ENCODE measurements at regions of chr9 and their contacts with region 1.

Region 1: GRCh38 chr9:35732122-35732799 is at the starts of genes CREB3 and TLN1:
- DNase-seq: peak; percentile 98
- ATAC-seq: peak; percentile 87
- H3K4me3 Mint-ChIP-seq: no peak within 1 kb of the TSS
- H3K27ac Mint-ChIP-seq: peak within 1 kb of the TSS; percentile 93
- H3K4me1 Mint-ChIP-seq: peaks cover 21% of the 10 kb centered on the region
- H3K27me3 Mint-ChIP-seq: no peaks in the 10 kb centered on the region
- total RNA-seq, gene CREB3: 24.0 to 26.0 TPM
- total RNA-seq, gene TLN1: 217 to 238 TPM

Region 2: DNA sequence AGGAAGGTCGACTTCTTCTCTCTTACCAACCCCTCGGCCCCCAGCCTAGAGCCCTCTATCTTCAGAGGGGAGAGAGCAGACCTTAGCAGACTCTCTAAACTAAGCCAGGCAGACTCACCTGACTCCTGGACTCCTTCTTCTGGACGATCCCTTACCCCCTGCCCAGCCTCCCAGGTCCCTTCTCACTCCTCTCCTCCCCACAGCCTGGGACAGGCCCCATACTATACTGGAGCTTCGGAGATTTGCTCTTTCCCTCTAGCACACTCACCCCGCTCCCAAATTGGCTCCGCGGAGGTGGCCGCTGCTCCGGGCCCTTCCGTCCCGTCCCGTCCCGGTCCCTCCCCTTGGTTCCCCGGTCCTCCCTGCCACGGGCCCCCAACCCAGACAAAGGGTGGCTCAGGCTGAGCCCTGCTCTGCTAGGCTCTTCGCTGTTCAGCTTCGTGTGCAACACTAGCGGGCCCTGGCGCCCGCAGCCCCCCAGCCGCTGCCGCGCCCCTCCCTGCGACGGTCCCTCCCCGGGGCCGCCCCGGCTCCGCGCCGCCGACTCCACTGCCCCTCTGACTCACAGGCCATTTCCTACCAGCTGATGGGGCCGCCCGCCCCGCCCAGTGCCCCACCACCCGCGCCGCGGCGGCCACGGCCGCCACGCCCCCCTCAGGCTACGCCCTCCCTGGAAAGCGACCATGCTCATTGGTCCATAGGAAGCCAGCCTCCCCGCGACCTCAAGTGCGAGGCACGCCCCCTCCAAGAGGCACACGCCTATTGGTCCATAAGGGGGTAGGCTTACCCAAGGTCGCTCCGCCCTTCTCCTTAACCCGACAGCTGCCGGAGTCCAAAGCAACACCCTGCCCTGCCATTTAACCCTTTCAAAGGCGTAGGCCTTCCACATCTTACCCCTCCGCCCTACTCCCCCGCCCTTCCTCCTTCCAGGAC is 621.0 kb before region 1 on chr9:
- CTCF ChIA-PET with region 1: no interaction called
- POLR2A ChIA-PET with region 1: no interaction called
- intact Hi-C with region 1: loop called (anchors 1 to 2 kb)
- DNase-seq: peak; percentile 98
- ATAC-seq: peak; percentile 82
- H3K4me3 Mint-ChIP-seq: peak overlapping the region; percentile 63
- H3K27ac Mint-ChIP-seq: peak overlapping the region; percentile 90
- H3K4me1 Mint-ChIP-seq: peaks cover 48% of the 10 kb centered on the region
- H3K27me3 Mint-ChIP-seq: no peaks in the 10 kb centered on the region

Region 3: DNA sequence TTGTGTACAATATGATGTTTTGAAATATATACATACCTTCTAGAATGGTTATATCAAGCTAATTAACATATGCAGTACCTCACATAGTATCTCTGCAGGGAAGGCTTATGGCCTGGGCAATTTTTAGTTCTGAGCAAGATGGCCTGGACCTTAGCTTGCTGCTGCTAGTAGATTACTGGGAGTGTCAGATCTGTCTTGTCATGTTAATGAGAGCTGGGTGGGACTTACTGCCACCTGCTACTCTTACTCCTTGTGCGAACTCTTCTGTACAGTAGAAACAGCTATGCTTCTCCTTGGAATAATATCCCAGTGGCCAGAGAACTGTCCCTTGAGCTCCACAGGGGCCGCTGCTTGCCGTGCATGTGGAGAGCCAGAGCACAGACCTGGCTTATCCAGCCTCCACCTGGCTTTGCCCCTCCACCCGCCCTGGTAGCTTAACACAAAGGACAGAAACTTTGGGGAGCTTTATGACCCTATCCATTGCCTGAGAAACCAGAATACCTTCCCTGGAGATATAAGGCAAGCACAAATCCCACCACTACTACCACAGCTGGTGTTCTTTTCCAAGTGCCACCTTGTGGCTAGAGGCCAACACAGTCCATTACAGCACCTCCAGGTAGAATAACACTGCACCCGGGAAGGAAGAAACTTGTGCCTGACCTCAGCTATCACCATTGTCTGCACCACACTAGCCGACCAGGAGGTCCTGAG is 316.7 kb before region 1 on chr9:
- CTCF ChIA-PET with region 1: no interaction called
- POLR2A ChIA-PET with region 1: no interaction called
- intact Hi-C with region 1: no loop called
- DNase-seq: no peak
- ATAC-seq: no peak
- H3K4me3 Mint-ChIP-seq: no peak overlapping the region
- H3K27ac Mint-ChIP-seq: no peak overlapping the region
- H3K4me1 Mint-ChIP-seq: no peaks in the 10 kb centered on the region
- H3K27me3 Mint-ChIP-seq: peaks cover 29% of the 10 kb centered on the region

Region 4: DNA sequence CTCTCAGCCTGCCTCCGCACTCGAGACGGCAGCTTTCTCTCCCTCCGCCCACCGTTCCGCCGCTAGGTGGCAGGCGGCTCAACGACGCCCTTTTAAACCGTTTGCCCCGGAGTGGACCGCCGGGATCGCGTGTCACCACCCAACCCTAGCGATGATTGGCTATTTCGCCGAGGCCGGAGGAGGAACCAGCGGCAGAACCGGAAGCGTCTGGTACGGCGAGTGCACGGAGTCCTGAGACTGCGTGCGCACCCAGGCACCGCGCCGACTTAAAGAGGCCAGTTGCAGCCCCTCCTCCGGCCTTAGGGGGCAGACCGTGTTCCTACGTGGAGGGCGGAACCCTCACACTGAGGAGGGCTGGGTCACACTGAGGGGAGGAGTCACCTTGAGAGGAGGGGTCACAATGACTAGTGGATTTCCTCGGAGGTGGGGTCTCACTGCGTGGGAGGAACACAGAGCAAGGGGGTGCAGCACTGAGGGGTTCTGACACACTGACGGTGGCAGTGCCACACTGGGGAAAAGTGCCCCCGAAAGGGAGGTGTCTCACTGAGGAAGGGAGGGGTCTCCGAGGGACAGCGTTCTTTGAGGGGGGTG is 128.2 kb before region 1 on chr9:
- CTCF ChIA-PET with region 1: interaction called, 5 read pairs
- POLR2A ChIA-PET with region 1: no interaction called
- intact Hi-C with region 1: loop called (anchors 1 kb)
- DNase-seq: peak; percentile 100
- ATAC-seq: peak; percentile 93
- H3K4me3 Mint-ChIP-seq: peak overlapping the region; percentile 83
- H3K27ac Mint-ChIP-seq: peak overlapping the region; percentile 96
- H3K4me1 Mint-ChIP-seq: peaks cover 23% of the 10 kb centered on the region
- H3K27me3 Mint-ChIP-seq: no peaks in the 10 kb centered on the region

Region 5: GRCh38 chr9:35657546-35658136 is 74.6 kb before region 1 on chr9 and contains the start of gene RMRP:
- CTCF ChIA-PET with region 1: interaction called, 28 read pairs
- POLR2A ChIA-PET with region 1: interaction called, 4 read pairs
- intact Hi-C with region 1: loop called (anchors 1 kb)
- DNase-seq: peak; percentile 97
- ATAC-seq: peak; percentile 95
- H3K4me3 Mint-ChIP-seq: peak within 1 kb of the TSS; percentile 80
- H3K27ac Mint-ChIP-seq: peak within 1 kb of the TSS; percentile 98
- H3K4me1 Mint-ChIP-seq: peaks cover 64% of the 10 kb centered on the region
- H3K27me3 Mint-ChIP-seq: peaks cover 2% of the 10 kb centered on the region
- total RNA-seq, gene RMRP: 894 to 11,462 TPM

Region 6: DNA sequence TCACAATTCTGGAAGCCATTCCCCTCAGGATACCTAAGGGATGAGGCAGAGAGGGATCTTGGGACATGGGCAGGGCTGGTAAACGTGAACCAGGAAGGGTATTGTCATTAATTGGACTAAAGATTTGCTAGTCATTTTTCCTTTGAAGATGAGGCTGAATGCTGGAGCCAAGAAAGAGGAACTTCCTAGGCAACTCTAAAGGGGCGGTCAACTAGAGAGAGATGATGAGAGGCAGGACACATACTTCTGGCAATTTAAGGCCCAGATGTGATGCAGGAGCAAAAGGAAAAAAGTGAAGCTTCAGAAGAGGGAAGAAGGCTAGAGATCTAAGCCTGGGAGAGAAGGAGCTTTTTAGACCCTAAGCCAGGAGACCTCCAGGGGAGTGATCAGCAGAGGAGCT is 11.2 kb after region 1 on chr9:
- CTCF ChIA-PET with region 1: interaction called, 54 read pairs
- POLR2A ChIA-PET with region 1: interaction called, 14 read pairs
- intact Hi-C with region 1: no loop called
- DNase-seq: no peak
- ATAC-seq: no peak
- H3K4me3 Mint-ChIP-seq: no peak overlapping the region
- H3K27ac Mint-ChIP-seq: no peak overlapping the region
- H3K4me1 Mint-ChIP-seq: peaks cover 37% of the 10 kb centered on the region
- H3K27me3 Mint-ChIP-seq: no peaks in the 10 kb centered on the region

Region 7: DNA sequence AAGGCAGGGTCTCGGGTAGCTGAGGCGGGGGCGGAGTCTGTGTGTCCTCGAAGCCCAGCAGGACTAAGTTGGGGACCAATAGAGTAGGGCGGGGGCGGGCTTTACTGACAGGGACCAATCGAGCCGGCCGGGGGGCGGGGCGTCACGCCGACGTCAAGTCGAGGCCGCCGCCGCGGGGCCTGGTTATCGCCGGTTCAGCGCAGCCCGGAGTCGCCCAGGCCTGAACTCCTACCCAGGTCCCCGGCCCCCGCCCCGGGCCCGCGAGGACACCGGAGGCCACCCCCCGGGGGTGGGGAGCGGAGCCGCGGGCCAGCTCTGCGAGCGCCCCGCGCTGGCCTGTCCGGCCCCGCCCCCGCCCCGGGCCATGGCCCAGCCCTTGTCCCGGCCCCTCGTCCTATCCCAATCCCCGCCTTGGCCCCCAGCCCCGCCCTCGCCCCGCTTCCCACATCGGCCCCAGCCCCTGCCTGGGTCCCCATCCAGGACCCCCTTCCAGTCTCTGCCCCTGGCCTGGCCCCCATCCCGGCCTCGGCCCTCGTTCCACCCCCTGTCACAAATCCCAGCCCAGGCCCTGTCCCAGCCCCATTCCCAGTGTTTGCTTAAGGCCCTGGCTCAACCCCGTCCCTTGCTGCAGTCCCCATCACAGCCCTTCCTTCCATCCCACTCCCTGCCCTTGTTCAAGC is 97.0 kb after region 1 on chr9 and contains the start of gene TMEM8B:
- CTCF ChIA-PET with region 1: interaction called, 3 read pairs
- POLR2A ChIA-PET with region 1: no interaction called
- intact Hi-C with region 1: loop called in 1 of 2 experiments (anchors 1 kb)
- DNase-seq: peak; percentile 98
- ATAC-seq: peak; percentile 92
- H3K4me3 Mint-ChIP-seq: peak within 1 kb of the TSS; percentile 78
- H3K27ac Mint-ChIP-seq: peak within 1 kb of the TSS; percentile 78
- H3K4me1 Mint-ChIP-seq: peaks cover 13% of the 10 kb centered on the region
- H3K27me3 Mint-ChIP-seq: no peaks in the 10 kb centered on the region
- total RNA-seq, gene TMEM8B: 5.8 to 6.9 TPM

Region 8: DNA sequence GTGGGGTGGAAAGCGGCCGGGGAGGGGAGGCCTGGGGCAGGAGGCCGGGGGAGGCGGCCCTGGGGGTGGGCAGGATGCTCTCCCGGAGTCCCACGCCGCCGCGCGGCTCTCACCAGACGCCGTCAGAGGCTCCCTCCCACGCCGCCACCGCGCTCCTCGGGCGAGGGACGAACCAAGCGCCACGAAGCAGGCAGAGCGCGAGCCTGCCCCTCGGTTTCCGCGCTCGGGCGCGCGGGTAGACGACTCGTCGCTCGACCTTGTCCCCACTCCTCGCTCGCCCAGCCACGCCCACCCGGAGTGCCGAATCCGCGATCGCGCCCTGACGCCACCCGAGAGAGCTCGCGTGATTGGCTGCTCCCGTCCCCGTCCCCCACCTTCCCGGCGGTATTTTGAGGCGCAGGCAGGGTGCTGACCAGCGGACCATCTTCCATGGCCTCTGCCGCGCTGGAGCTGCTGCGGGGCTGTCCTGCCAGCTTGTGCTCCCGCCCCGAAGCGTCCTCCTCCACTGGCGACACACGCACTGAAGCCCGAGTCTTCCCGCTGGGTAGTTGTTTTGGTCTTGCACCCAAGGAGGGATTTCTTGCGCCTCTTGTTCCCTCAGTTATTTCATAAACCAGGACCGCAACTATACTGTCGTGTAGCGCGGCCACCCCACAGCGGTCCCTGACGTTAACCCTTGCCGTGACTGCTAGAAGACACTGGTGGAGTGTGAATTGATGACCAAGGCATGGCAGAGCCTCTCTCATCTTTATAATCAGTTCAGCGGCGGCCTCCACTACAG is 526.1 kb after region 1 on chr9 and contains the start of gene GNE:
- CTCF ChIA-PET with region 1: no interaction called
- POLR2A ChIA-PET with region 1: no interaction called
- intact Hi-C with region 1: loop called in 1 of 2 experiments (anchors 5 kb)
- DNase-seq: peak; percentile 99
- ATAC-seq: peak; percentile 85
- H3K4me3 Mint-ChIP-seq: peak within 1 kb of the TSS; percentile 91
- H3K27ac Mint-ChIP-seq: peak within 1 kb of the TSS; percentile 90
- H3K4me1 Mint-ChIP-seq: peaks cover 8% of the 10 kb centered on the region
- H3K27me3 Mint-ChIP-seq: no peaks in the 10 kb centered on the region
- total RNA-seq, gene GNE: 17.0 to 19.0 TPM